ENCODE measurements at regions of chr21 and their contacts with region 1.

Region 1: GRCh38 chr21:39445321-39446269 is at the start of gene LCA5L:
- DNase-seq: peak; percentile 87
- H3K4me3 Mint-ChIP-seq: peak within 1 kb of the TSS; percentile 89
- H3K27ac Mint-ChIP-seq: peak within 1 kb of the TSS; percentile 96
- H3K4me1 Mint-ChIP-seq: peaks cover 9% of the 10 kb centered on the region
- H3K27me3 Mint-ChIP-seq: no peaks in the 10 kb centered on the region
- CTCF ChIP-seq: no peak
- total RNA-seq, gene LCA5L: 2.8 and 4.3 TPM in 2 replicates

Region 2: GRCh38 chr21:39183237-39184007 is 262.2 kb before region 1 on chr21 and contains the start of gene PSMG1:
- CTCF ChIA-PET with region 1: no interaction called
- POLR2A ChIA-PET with region 1: interaction called, 8 read pairs
- intact Hi-C with region 1: loop called (anchors 1 kb)
- DNase-seq: peak; percentile 95
- H3K4me3 Mint-ChIP-seq: peak within 1 kb of the TSS; percentile 99
- H3K27ac Mint-ChIP-seq: peak within 1 kb of the TSS; percentile 95
- H3K4me1 Mint-ChIP-seq: peaks cover 33% of the 10 kb centered on the region
- H3K27me3 Mint-ChIP-seq: no peaks in the 10 kb centered on the region
- CTCF ChIP-seq: no peak
- total RNA-seq, gene PSMG1: 79.9 and 116 TPM in 2 replicates

Region 3: GRCh38 chr21:39373644-39374043 is 72.0 kb before region 1 on chr21:
- CTCF ChIA-PET with region 1: interaction called, 10 read pairs
- POLR2A ChIA-PET with region 1: no interaction called
- intact Hi-C with region 1: loop called (anchors 2 kb)
- DNase-seq: peak; percentile 39
- H3K4me3 Mint-ChIP-seq: no peak overlapping the region
- H3K27ac Mint-ChIP-seq: no peak overlapping the region
- H3K4me1 Mint-ChIP-seq: peaks cover 7% of the 10 kb centered on the region
- H3K27me3 Mint-ChIP-seq: no peaks in the 10 kb centered on the region
- CTCF ChIP-seq: peak; percentile 32

Region 4: DNA sequence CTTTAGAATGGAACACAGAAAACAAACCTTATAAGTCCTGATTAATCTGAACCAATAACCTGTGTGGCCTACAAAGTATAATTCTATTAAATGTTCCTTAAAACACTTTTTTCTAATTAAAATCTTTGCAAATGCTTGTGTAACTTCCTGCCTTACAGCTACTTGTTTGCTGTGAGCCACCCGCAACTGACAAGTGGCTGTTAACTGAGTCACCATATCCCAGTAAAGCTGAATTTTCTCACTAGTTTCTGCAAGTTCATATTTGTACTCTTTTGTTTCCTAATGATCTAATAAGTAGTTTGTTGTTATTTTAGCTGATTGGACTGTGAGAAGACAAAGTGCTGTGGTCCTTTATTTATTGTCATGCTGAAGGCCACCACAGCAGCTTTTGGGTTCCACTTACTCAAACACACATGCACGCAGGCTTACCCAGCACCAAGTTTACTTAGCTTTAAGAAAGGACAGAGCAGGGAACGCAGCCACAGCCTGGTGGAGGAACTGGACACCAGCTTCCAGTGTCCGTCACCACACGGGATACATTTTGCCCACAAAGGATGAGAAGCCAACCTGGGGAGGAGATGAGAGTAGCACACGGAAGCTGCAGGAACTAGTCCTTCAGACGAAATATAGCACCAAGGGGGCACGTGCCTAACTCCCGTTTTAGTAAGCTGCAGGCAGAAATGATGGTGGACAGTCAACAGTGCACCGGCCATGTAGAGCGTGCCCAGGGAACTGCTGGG is 47.8 kb before region 1 on chr21:
- CTCF ChIA-PET with region 1: interaction called, 12 read pairs
- POLR2A ChIA-PET with region 1: interaction called, 3 read pairs
- intact Hi-C with region 1: no loop called
- DNase-seq: no peak
- H3K4me3 Mint-ChIP-seq: no peak overlapping the region
- H3K27ac Mint-ChIP-seq: no peak overlapping the region
- H3K4me1 Mint-ChIP-seq: no peaks in the 10 kb centered on the region
- H3K27me3 Mint-ChIP-seq: no peaks in the 10 kb centered on the region
- CTCF ChIP-seq: no peak

Region 5: GRCh38 chr21:39430457-39430856 is 15.1 kb before region 1 on chr21:
- CTCF ChIA-PET with region 1: interaction called, 59 read pairs
- POLR2A ChIA-PET with region 1: no interaction called
- intact Hi-C with region 1: no loop called
- DNase-seq: no peak
- H3K4me3 Mint-ChIP-seq: no peak overlapping the region
- H3K27ac Mint-ChIP-seq: no peak overlapping the region
- H3K4me1 Mint-ChIP-seq: no peaks in the 10 kb centered on the region
- H3K27me3 Mint-ChIP-seq: no peaks in the 10 kb centered on the region
- CTCF ChIP-seq: no peak

Region 6: GRCh38 chr21:39776589-39776988 is 331.0 kb after region 1 on chr21:
- CTCF ChIA-PET with region 1: no interaction called
- POLR2A ChIA-PET with region 1: no interaction called
- intact Hi-C with region 1: no loop called
- DNase-seq: no peak
- H3K4me3 Mint-ChIP-seq: no peak overlapping the region
- H3K27ac Mint-ChIP-seq: no peak overlapping the region
- H3K4me1 Mint-ChIP-seq: no peaks in the 10 kb centered on the region
- H3K27me3 Mint-ChIP-seq: no peaks in the 10 kb centered on the region
- CTCF ChIP-seq: no peak